OCI-LY7 (cell line): ENCODE measurements at regions of chr5 and their contacts with region 1.

Region 1: DNA sequence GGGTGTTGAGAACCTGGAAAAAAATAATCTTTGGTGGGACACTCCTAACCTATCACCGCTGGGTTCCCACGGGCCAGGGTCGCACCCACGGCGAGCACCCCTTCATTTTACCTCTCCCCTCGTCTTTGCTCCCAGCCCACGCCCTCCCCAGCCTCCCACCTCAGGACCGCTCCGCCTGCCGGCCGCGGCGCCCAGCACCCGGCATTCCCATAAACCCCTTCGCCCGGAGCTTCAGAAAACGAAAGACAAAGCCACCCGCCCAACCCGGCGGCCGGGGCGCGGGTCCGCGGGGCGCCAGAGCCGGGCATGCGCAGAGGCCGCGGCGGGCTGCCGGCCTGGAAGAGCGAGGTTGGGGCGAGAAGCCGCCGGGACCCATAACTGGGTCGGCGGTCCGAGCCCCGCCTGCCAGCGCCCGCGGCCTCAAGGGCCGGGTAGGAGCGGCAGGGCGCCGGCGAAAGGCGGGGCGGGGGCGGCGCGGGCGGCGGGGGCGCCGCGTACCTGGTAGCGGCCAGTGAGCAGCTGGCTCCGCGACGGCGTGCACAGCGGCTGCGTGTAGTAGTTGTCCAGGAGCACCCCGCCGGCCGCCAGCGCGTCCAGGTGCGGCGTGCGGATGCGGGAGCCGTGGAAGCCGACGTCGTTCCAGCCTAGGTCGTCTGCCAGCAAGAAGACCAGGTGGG is 533 bp downstream of the ARSB start:
- DNase-seq: peak; percentile 88
- H3K4me3 ChIP-seq: peak overlapping the region; percentile 75
- H3K27ac ChIP-seq: peak overlapping the region; percentile 88
- H3K4me1 ChIP-seq: peaks cover 40% of the 10 kb centered on the region
- CTCF ChIP-seq: peak; percentile 33

Region 2: GRCh38 chr5:78648359-78649210 is 336.0 kb before region 1 on chr5 and contains the start of gene LHFPL2:
- CTCF ChIA-PET with region 1: no interaction called
- POLR2A ChIA-PET with region 1: no interaction called
- intact Hi-C with region 1: loop called (anchors 10 kb)
- DNase-seq: peak; percentile 75
- H3K4me3 ChIP-seq: peak within 1 kb of the TSS; percentile 77
- H3K27ac ChIP-seq: peak within 1 kb of the TSS; percentile 20
- H3K4me1 ChIP-seq: peaks cover 31% of the 10 kb centered on the region
- CTCF ChIP-seq: 0 out of 2 replicates have a peak, but pooled peaks have one; percentile 39
- total RNA-seq, gene LHFPL2: 8.4 and 12.2 TPM in 2 replicates

Region 3: DNA sequence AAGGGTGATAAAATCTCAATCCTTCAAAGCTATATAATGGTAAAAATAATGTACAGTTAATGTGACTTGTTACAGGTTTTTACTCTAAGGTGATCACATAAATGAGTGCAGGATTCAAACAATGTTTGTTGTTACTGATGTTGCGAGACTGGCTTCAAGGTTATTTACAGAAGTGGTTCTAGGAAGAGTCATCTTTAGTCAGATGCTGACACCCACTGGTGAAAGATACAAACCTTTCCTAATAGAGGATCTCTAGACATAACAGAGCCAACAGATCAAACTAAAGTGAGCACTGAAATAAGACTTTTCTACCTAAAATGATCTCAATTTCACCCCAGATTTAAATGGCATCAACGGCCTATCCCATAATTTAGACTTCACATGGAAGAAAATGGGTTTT is 19.7 kb before region 1 on chr5:
- CTCF ChIA-PET with region 1: no interaction called
- POLR2A ChIA-PET with region 1: interaction called, 12 read pairs
- intact Hi-C with region 1: no loop called
- DNase-seq: peak; percentile 76
- H3K4me3 ChIP-seq: no peak overlapping the region
- H3K27ac ChIP-seq: no peak overlapping the region
- H3K4me1 ChIP-seq: no peaks in the 10 kb centered on the region
- CTCF ChIP-seq: peak; percentile 84

Region 4: DNA sequence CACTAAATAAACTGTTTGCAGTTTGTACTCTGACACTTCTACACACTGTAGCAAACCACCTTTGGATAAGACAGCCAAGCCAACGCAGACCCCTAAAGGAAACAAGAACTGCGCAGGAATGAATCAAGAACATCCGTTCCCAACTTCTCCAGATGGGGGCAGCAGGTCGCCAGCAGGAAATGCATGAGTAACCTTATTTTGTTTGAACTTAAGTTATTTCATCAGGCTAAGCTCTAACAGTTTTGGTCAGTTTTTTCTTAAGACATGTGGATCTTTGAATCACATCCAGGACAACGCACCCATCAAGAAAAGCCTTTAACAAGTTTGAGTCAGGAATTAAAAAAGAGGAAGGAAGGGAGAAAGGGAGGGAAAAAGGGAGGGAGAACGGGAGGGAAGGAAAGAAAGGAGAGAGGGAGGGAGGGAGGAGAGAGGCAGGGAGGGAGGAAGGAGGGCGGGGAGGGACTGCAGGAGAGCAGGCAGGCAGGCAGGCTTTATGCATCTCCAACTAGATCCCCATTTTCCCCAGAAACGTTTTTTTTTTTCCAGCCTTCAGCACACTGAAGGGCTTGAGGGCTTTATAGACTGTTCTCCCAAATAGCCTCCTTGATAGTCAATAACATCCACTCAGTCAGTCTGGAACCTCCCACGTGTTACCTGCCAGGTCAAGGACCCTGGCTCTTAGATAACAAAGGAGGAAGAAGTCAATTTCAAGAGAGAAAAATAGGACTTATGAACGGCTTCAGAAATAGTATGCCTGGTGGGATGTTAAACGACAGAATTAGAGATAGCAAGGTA is 149.3 kb after region 1 on chr5:
- CTCF ChIA-PET with region 1: no interaction called
- POLR2A ChIA-PET with region 1: interaction called, 4 read pairs
- intact Hi-C with region 1: loop called (anchors 1 kb)
- DNase-seq: peak; percentile 81
- H3K4me3 ChIP-seq: peak overlapping the region; percentile 6
- H3K27ac ChIP-seq: no peak overlapping the region
- H3K4me1 ChIP-seq: peaks cover 10% of the 10 kb centered on the region
- CTCF ChIP-seq: peak; percentile 81

Region 5: GRCh38 chr5:79396265-79396664 is 411.7 kb after region 1 on chr5:
- CTCF ChIA-PET with region 1: no interaction called
- POLR2A ChIA-PET with region 1: no interaction called
- intact Hi-C with region 1: no loop called
- DNase-seq: no peak
- H3K4me3 ChIP-seq: no peak overlapping the region
- H3K27ac ChIP-seq: no peak overlapping the region
- H3K4me1 ChIP-seq: no peaks in the 10 kb centered on the region
- CTCF ChIP-seq: no peak

Region 6: GRCh38 chr5:79514391-79515105 is 530.0 kb after region 1 on chr5:
- CTCF ChIA-PET with region 1: no interaction called
- POLR2A ChIA-PET with region 1: interaction called, 3 read pairs
- intact Hi-C with region 1: loop called (anchors 1 kb)
- DNase-seq: peak; percentile 92
- H3K4me3 ChIP-seq: peak overlapping the region; percentile 71
- H3K27ac ChIP-seq: peak overlapping the region; percentile 63
- H3K4me1 ChIP-seq: peaks cover 39% of the 10 kb centered on the region
- CTCF ChIP-seq: no peak